ENCODE measurements at regions of chr2 and their contacts with region 1.

Region 1: GRCh38 chr2:142849816-142850215 is 27.6 kb upstream of the KYNU start:
- DNase-seq: no peak
- H3K4me3 ChIP-seq: no peak overlapping the region
- H3K27ac ChIP-seq: no peak overlapping the region
- H3K4me1 ChIP-seq: no peaks in the 10 kb centered on the region
- H3K27me3 ChIP-seq: no peaks in the 10 kb centered on the region
- CTCF ChIP-seq: no peak
- POLR2A ChIP-seq: no peak

Region 2: DNA sequence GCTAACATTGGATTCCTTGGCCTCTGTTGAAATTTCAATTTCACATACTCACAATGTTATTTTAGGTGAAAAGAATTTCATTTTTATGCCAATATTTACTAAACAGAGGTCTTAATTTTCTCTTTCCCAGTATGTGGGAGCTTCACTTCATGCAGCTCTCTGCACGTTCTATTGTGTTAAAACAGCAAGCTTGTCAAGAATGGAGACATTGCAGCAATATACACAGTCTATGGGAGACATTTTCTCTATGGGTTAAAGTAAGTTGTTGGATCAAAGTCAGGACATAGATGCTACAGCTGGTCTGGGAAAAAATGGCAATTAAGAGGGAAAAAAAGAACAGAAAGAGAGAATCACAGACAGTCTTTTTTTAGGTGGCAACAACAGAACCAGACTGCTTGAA is 209.0 kb after region 1 on chr2:
- intact Hi-C with region 1: loop called (anchors 10 kb)
- DNase-seq: no peak
- H3K4me3 ChIP-seq: no peak overlapping the region
- H3K27ac ChIP-seq: no peak overlapping the region
- H3K4me1 ChIP-seq: no peaks in the 10 kb centered on the region
- H3K27me3 ChIP-seq: no peaks in the 10 kb centered on the region
- CTCF ChIP-seq: no peak
- POLR2A ChIP-seq: no peak

Region 3: DNA sequence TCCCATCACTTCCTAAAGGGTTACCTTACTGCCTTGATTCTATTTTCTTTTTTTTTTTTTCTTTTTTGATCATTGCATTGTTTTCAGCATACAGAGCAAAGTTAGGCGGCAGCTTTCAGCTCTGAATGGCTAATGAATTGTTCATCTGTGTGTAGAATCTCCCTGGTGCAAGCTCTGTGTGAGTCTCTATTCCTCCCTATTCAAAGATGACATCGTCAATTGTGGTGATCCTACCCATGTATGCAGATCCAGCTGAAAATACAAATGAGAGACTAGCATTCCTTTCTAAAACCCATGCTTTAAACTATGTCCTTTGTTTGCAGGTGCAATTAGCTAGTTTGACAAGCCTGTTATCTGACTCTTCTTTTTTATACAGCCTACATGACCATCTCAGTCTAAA is 818.4 kb after region 1 on chr2:
- intact Hi-C with region 1: no loop called
- DNase-seq: no peak
- H3K4me3 ChIP-seq: no peak overlapping the region
- H3K27ac ChIP-seq: no peak overlapping the region
- H3K4me1 ChIP-seq: no peaks in the 10 kb centered on the region
- H3K27me3 ChIP-seq: no peaks in the 10 kb centered on the region
- CTCF ChIP-seq: no peak
- POLR2A ChIP-seq: no peak